HCT116 (cell line): ENCODE measurements at regions of chr9 and their contacts with region 1.

Region 1: GRCh38 chr9:36190388-36191287 is at the start of gene CLTA:
- DNase-seq: peak; percentile 98
- ATAC-seq: peak; percentile 98
- H3K4me3 ChIP-seq: peak within 1 kb of the TSS; percentile 87 to 91
- H3K27ac ChIP-seq: peak within 1 kb of the TSS; percentile 80
- H3K4me1 ChIP-seq: peaks cover 12 to 20% of the 10 kb centered on the region in 2 experiments
- H3K27me3 ChIP-seq: no peaks in the 10 kb centered on the region
- CTCF ChIP-seq: peak; percentile 35 to 56 (median 52); a peak in 4 of 6 replicates
- POLR2A ChIP-seq: peak; percentile 96
- RAD21 ChIP-seq: peak; percentile 41; the same call in 1 of the 2 replicates
- total RNA-seq, gene CLTA: 152 TPM

Region 2: DNA sequence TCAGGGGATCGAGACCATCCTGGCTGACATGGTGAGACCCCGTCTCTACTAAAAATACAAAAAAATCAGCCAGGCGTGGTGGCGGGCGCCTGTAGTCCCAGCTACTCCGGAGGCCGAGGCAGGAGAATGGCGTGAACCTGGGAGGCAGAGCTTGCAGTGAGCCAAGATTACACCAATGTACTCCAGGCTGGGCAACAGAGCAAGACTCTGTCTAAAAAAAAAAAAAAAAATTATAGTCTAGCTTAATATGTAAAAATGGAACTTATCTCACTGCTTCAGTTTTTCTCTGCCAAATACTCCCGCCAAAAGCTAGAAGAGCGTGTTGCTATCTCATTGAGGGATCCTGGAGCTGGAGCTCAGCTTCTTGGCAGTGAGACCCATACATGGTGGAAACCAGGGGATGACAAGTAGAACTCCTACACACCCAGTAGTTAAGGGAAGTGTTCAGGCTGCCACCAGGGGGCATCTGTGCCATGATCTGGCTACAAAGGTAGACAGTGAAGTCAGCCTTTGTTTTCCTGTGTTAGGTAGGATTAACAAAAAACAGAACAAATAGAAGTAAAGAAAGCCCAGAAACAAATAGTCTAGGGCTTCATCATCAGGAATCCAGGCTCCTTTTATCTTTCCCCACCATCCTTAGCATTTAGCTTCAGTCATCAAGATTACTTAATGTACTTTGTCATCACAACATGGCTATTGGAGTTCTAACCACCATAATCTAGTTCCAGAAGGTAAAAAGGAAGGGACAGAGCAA is 87.7 kb before region 1 on chr9:
- CTCF ChIA-PET with region 1: interaction called, 12 read pairs
- POLR2A ChIA-PET with region 1: interaction called, 3 read pairs
- RAD21 ChIA-PET with region 1: no interaction called
- intact Hi-C with region 1: no loop called
- DNase-seq: peak; percentile 57
- ATAC-seq: peak; percentile 97
- H3K4me3 ChIP-seq: no peak overlapping the region
- H3K27ac ChIP-seq: no peak overlapping the region
- H3K4me1 ChIP-seq: peaks cover 0 to 24% of the 10 kb centered on the region in 2 experiments; a peak in 2 of 4 replicates
- H3K27me3 ChIP-seq: no peaks in the 10 kb centered on the region
- CTCF ChIP-seq: peak; percentile 76 to 93 (median 90)
- POLR2A ChIP-seq: no peak
- RAD21 ChIP-seq: peak; percentile 71

Region 3: GRCh38 chr9:36204906-36205547 is 14.4 kb after region 1 on chr9:
- CTCF ChIA-PET with region 1: interaction called, 5 read pairs
- POLR2A ChIA-PET with region 1: interaction called, 13 read pairs
- RAD21 ChIA-PET with region 1: no interaction called
- intact Hi-C with region 1: no loop called
- DNase-seq: no peak
- ATAC-seq: peak; percentile 89
- H3K4me3 ChIP-seq: no peak overlapping the region
- H3K27ac ChIP-seq: no peak overlapping the region
- H3K4me1 ChIP-seq: no peaks in the 10 kb centered on the region
- H3K27me3 ChIP-seq: no peaks in the 10 kb centered on the region
- CTCF ChIP-seq: peak in 2 of 3 experiments; percentile 26 to 39; a peak in 3 of 6 replicates
- POLR2A ChIP-seq: no peak
- RAD21 ChIP-seq: no peak

Region 4: GRCh38 chr9:36328798-36329411 is 138.3 kb after region 1 on chr9:
- CTCF ChIA-PET with region 1: interaction called, 22 read pairs
- POLR2A ChIA-PET with region 1: no interaction called
- RAD21 ChIA-PET with region 1: interaction called in 1 of 2 experiments, 4 read pairs
- intact Hi-C with region 1: no loop called
- DNase-seq: peak; percentile 63
- ATAC-seq: peak; percentile 86
- H3K4me3 ChIP-seq: no peak overlapping the region
- H3K27ac ChIP-seq: no peak overlapping the region
- H3K4me1 ChIP-seq: no peaks in the 10 kb centered on the region; a peak in 1 of 4 replicates
- H3K27me3 ChIP-seq: no peaks in the 10 kb centered on the region
- CTCF ChIP-seq: peak; percentile 67 to 86 (median 84)
- POLR2A ChIP-seq: no peak
- RAD21 ChIP-seq: peak; percentile 87